BJ (cell line): ENCODE measurements at regions of chr12 and their contacts with region 1.

Region 1: GRCh38 chr12:27014085-27014858 is at the start of gene TM7SF3:
- DNase-seq: peak; percentile 24
- H3K4me3 ChIP-seq: peak within 1 kb of the TSS; percentile 89
- H3K27me3 ChIP-seq: no peaks in the 10 kb centered on the region
- CTCF ChIP-seq: peak; percentile 69
- polyA plus RNA-seq, gene TM7SF3: 75.2 and 111 TPM in 2 replicates

Region 2: DNA sequence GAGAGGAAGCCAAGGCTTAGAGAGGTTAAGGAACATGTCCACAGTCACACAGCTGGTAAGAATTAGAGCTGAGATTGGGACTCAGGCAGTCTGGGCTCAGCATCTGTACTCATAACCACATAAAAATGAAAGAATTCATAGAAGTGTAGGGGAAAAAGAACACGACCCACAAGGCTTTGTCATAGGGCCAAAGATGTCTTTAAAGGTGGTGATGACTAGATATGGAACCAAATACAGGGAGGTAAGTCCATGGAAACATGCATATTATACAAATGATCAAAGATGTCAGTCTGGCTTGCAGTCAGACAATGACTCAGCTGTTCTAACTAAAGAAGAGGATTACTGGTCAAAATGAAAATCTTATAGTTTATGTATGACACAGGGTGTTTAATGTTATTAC is 826.1 kb before region 1 on chr12:
- CTCF ChIA-PET with region 1: no interaction called
- POLR2A ChIA-PET with region 1: no interaction called
- DNase-seq: peak; percentile 71
- H3K4me3 ChIP-seq: no peak overlapping the region
- H3K27me3 ChIP-seq: 0 out of 2 replicates have a peak, but pooled peaks cover 1% of the 10 kb centered on the region
- CTCF ChIP-seq: no peak

Region 3: DNA sequence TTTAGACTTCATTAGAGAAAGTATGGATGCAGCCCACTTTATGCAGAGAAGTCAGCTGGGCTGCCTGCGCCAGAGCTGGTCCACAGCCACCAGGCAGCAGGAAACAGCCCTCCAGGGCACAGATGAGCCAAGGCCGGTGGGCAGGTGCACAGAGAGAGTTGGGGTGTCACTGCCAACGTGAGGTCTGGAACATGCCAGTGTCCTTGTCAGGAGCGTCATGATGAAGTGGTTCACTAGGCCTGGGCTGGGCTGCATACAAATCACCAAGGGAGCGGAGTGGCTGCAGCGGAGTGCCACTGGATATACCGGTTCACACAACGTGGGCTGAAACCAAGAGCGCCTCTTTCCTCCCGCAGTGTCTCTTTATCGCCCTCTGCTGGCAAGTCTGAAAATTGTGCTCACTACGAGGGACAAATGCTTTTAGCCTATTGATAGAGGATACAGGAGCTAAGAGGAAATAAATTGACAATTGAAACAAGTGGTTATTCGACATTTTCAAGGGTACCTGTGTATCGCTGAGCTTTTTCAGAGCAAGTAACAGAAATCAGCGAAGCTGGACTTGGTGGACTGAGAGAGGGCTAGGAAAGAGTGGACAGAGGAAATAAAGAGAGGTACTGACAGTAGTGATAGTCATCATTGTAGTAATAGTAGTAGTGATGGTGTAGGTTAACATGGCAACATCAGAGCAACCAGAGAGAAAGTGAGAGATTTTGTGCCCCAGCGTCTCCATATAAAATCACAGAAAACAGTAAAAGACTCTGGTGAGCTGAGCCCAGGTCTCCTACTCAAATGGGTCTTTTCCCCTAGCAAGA is 129.3 kb before region 1 on chr12:
- CTCF ChIA-PET with region 1: interaction called, 12 read pairs
- POLR2A ChIA-PET with region 1: no interaction called
- DNase-seq: no peak
- H3K4me3 ChIP-seq: no peak overlapping the region
- H3K27me3 ChIP-seq: no peaks in the 10 kb centered on the region
- CTCF ChIP-seq: peak; percentile 93

Region 4: GRCh38 chr12:27003421-27004381 is 10.6 kb before region 1 on chr12:
- CTCF ChIA-PET with region 1: interaction called, 31 read pairs
- POLR2A ChIA-PET with region 1: no interaction called
- DNase-seq: no peak
- H3K4me3 ChIP-seq: no peak overlapping the region
- H3K27me3 ChIP-seq: no peaks in the 10 kb centered on the region
- CTCF ChIP-seq: no peak

Region 5: GRCh38 chr12:27024291-27024690 is 10.0 kb after region 1 on chr12:
- CTCF ChIA-PET with region 1: interaction called, 10 read pairs
- POLR2A ChIA-PET with region 1: interaction called, 6 read pairs
- DNase-seq: no peak
- H3K4me3 ChIP-seq: no peak overlapping the region
- H3K27me3 ChIP-seq: no peaks in the 10 kb centered on the region
- CTCF ChIP-seq: no peak

Region 6: GRCh38 chr12:27142101-27142721 is 127.9 kb after region 1 on chr12:
- CTCF ChIA-PET with region 1: interaction called, 10 read pairs
- POLR2A ChIA-PET with region 1: no interaction called
- DNase-seq: peak; percentile 32
- H3K4me3 ChIP-seq: no peak overlapping the region
- H3K27me3 ChIP-seq: no peaks in the 10 kb centered on the region
- CTCF ChIP-seq: peak; percentile 91

Region 7: GRCh38 chr12:27305673-27306456 is 291.6 kb after region 1 on chr12:
- CTCF ChIA-PET with region 1: interaction called, 67 read pairs
- POLR2A ChIA-PET with region 1: no interaction called
- DNase-seq: no peak
- H3K4me3 ChIP-seq: no peak overlapping the region
- H3K27me3 ChIP-seq: no peaks in the 10 kb centered on the region
- CTCF ChIP-seq: 0 out of 2 replicates have a peak, but pooled peaks have one; percentile 26